ENCODE measurements at regions of chr6 and their contacts with region 1.

Region 1: GRCh38 chr6:25223490-25223991 is 55.6 kb upstream of the CARMIL1 start:
- H3K4me3 ChIP-seq: no peak overlapping the region
- H3K27ac ChIP-seq: no peak overlapping the region
- H3K4me1 ChIP-seq: peaks cover 9% of the 10 kb centered on the region
- CTCF ChIP-seq: peak; percentile 75

Region 2: GRCh38 chr6:25205629-25206028 is 17.9 kb before region 1 on chr6:
- CTCF ChIA-PET with region 1: interaction called, 10 read pairs
- POLR2A ChIA-PET with region 1: no interaction called
- H3K4me3 ChIP-seq: no peak overlapping the region
- H3K27ac ChIP-seq: no peak overlapping the region
- H3K4me1 ChIP-seq: no peaks in the 10 kb centered on the region
- CTCF ChIP-seq: no peak

Region 3: GRCh38 chr6:25263657-25264056 is 40.1 kb after region 1 on chr6:
- CTCF ChIA-PET with region 1: interaction called, 24 read pairs
- POLR2A ChIA-PET with region 1: interaction called, 5 read pairs
- H3K4me3 ChIP-seq: no peak overlapping the region
- H3K27ac ChIP-seq: no peak overlapping the region
- H3K4me1 ChIP-seq: no peaks in the 10 kb centered on the region; the same call in 1 of the 2 replicates
- CTCF ChIP-seq: no peak

Region 4: DNA sequence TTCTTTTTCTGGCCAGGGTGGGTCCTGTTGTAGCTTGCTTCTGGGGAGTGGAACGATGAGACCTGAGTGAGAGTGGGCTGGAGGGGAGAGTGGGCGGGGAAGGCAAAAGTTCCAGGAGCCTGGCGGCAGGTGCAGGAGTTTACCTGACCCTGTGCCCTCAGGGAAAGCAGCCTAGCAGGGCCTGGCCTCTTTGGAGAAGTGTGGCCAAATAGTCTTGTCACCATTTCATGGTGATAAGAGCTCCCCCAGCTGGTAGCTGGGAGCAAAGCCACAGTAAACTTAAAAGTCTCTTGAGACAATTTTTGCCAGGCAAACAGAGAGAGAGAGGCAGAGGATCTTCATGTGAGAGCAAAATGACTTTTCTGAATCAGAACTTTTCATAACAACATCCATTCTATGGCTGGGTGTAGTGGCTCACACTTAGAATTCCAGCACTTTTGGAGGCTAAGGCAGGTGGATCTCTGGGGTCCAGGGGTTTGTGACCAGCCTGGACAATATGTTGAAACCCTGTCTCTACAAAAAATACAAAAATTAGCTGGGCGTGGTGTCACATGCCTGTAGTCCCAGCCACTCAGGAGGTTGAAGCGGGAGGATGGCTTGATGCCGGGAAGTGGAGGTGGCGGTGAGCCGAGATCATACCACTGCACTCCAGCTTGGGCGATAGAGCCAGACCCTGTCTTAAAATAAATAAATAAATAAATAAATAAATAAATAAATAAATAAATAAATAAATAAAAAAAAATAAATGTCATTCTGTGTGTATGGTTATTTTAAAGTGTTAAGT is 266.7 kb after region 1 on chr6:
- CTCF ChIA-PET with region 1: interaction called, 40 read pairs
- POLR2A ChIA-PET with region 1: no interaction called
- H3K4me3 ChIP-seq: no peak overlapping the region
- H3K27ac ChIP-seq: no peak overlapping the region
- H3K4me1 ChIP-seq: peaks cover 19% of the 10 kb centered on the region
- CTCF ChIP-seq: peak; percentile 58

Region 5: GRCh38 chr6:25601800-25602673 is 378.5 kb after region 1 on chr6:
- CTCF ChIA-PET with region 1: interaction called, 28 read pairs
- POLR2A ChIA-PET with region 1: no interaction called
- H3K4me3 ChIP-seq: no peak overlapping the region
- H3K27ac ChIP-seq: no peak overlapping the region
- H3K4me1 ChIP-seq: no peaks in the 10 kb centered on the region
- CTCF ChIP-seq: peak; percentile 28; the same call in 1 of the 2 replicates

Region 6: GRCh38 chr6:25889877-25890853 is 666.6 kb after region 1 on chr6:
- CTCF ChIA-PET with region 1: interaction called, 12 read pairs
- POLR2A ChIA-PET with region 1: no interaction called
- H3K4me3 ChIP-seq: no peak overlapping the region
- H3K27ac ChIP-seq: no peak overlapping the region
- H3K4me1 ChIP-seq: no peaks in the 10 kb centered on the region
- CTCF ChIP-seq: no peak

Measured in HEK293 (cell line).